ENCODE measurements at regions of chr7 and their contacts with region 1.

Region 1: GRCh38 chr7:12731214-12731656 is 43.8 kb downstream of the ARL4A start:
- DNase-seq: peak; percentile 14
- H3K4me3 Mint-ChIP-seq: no peak overlapping the region
- H3K27ac Mint-ChIP-seq: peak overlapping the region; percentile 46
- H3K4me1 Mint-ChIP-seq: peaks cover 24% of the 10 kb centered on the region
- H3K27me3 Mint-ChIP-seq: no peaks in the 10 kb centered on the region

Region 2: DNA sequence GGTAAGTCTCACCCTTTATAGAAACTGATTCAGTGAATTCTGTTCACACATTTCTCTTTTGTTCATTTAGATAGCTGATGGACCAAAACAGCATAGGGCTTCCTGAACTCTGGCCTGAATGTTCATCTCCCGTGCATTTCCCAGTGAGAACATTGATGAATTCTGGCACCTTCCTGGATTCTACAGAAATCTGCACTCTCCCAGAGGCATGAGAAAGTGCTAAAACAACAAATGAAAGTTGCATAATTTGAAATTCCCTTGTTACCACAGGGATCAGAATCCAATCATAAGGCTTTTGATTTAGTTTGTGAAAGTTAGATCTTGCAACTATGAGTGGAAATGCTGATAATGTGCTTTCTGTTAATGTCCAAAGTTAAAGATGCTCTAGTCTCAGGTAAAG is 190.4 kb before region 1 on chr7:
- CTCF ChIA-PET with region 1: no interaction called
- POLR2A ChIA-PET with region 1: no interaction called
- intact Hi-C with region 1: no loop called
- DNase-seq: no peak
- H3K4me3 Mint-ChIP-seq: no peak overlapping the region
- H3K27ac Mint-ChIP-seq: no peak overlapping the region
- H3K4me1 Mint-ChIP-seq: no peaks in the 10 kb centered on the region
- H3K27me3 Mint-ChIP-seq: peaks cover 4% of the 10 kb centered on the region

Region 3: DNA sequence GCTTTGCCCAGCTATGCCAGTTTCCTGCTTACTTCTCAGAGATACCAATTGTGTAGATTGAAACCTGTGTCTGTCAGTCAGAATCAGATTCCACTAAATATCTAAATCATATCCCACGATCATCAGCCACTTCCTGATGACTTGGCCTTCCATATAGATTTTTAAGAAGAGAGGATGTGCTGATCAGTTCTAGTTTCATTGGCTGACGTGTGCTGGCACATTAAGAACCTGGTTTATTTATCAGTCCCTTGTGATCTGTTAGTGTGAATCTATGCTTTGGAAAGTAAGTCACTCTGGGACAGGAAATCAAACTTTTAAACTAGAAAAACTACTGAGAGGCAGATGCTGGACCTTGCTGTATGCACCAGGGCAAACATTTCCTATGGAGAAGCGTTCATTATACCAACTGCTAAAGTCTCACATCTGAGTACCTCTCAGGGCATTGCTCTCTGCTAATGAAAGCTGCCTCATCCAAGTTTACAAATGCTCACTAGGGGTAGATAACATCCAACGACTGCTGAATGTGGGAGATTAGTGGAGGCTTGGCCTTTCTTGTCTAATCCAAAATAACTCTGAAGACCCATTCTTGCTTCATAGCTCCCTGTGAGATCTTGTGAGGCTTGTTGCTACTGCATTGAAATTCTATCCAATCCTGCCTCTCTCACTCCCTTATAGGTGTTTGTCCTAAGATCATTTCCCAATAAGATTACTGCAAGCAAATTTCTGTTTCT is 65.3 kb after region 1 on chr7:
- CTCF ChIA-PET with region 1: no interaction called
- POLR2A ChIA-PET with region 1: no interaction called
- intact Hi-C with region 1: loop called (anchors 5 kb)
- DNase-seq: no peak
- H3K4me3 Mint-ChIP-seq: no peak overlapping the region
- H3K27ac Mint-ChIP-seq: no peak overlapping the region
- H3K4me1 Mint-ChIP-seq: peaks cover 4% of the 10 kb centered on the region
- H3K27me3 Mint-ChIP-seq: no peaks in the 10 kb centered on the region

Region 4: DNA sequence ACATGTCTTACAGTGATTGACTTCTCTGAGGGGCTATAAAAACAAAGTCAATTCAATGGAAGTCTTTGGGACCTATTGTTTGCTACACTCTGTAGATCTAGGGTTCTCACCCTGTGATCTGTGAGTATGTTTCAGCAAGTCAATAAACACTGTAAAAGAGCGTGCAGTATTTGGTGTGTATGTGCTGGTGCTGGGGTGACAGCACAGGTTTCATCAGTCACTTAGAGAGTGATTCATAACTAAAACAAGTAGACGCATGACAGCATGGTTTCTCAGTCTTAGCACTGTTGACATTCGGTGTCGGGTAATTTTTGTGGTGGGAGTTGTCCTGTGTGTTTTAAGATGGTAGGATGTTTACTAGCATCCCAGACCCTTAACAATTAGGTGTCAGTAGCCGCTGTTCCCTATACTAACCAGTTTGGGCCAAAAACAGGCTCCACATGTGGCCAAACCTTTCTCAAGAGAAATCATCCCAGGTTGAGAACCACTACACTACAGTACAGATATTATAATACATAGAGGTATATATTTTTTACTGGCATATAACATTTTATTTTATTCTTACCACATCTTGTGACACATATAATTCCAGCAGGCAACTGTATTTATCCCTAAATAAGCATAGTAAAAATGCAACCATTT is 368.0 kb after region 1 on chr7:
- CTCF ChIA-PET with region 1: no interaction called
- POLR2A ChIA-PET with region 1: no interaction called
- intact Hi-C with region 1: no loop called
- DNase-seq: peak; percentile 25
- H3K4me3 Mint-ChIP-seq: no peak overlapping the region
- H3K27ac Mint-ChIP-seq: no peak overlapping the region
- H3K4me1 Mint-ChIP-seq: peaks cover 3% of the 10 kb centered on the region
- H3K27me3 Mint-ChIP-seq: peaks cover 7% of the 10 kb centered on the region